Endothelial cell of umbilical vein (primary cell): ENCODE measurements at regions of chr18 and their contacts with region 1.

Region 1: GRCh38 chr18:71598374-71598773 is 945.8 kb downstream of the CBLN2 start:
- DNase-seq: peak; percentile 28
- H3K4me3 ChIP-seq: no peak overlapping the region
- H3K27ac ChIP-seq: no peak overlapping the region
- H3K4me1 ChIP-seq: peaks cover 22% of the 10 kb centered on the region
- H3K27me3 ChIP-seq: no peaks in the 10 kb centered on the region
- CTCF ChIP-seq: no peak
- POLR2A ChIP-seq: no peak

Region 2: DNA sequence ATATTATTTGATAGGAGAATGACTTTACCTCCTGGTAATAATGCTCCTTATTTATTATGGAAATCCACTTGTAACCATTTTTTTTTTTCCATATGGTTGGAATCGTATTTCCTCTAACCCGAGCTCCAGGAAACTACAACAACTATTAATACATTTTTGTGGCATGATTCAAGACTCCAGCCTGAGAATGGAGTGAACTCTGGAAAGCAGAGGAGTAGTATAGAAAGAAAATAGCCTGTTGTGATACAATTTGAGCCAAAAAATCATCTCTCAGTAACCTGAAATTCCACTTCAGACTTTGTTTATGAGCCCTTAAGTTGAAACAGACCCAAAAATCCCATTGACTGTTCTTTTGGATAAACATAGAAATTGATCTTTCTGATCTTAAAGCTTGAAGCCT is 388.4 kb before region 1 on chr18:
- CTCF ChIA-PET with region 1: no interaction called
- POLR2A ChIA-PET with region 1: no interaction called
- dilution Hi-C with region 1: no loop called
- intact Hi-C with region 1: no loop called
- DNase-seq: peak; percentile 90
- H3K4me3 ChIP-seq: no peak overlapping the region
- H3K27ac ChIP-seq: peak overlapping the region; percentile 70
- H3K4me1 ChIP-seq: peaks cover 11% of the 10 kb centered on the region
- H3K27me3 ChIP-seq: no peaks in the 10 kb centered on the region
- CTCF ChIP-seq: no peak
- POLR2A ChIP-seq: no peak

Region 3: GRCh38 chr18:71431171-71431570 is 167.2 kb before region 1 on chr18:
- CTCF ChIA-PET with region 1: no interaction called
- POLR2A ChIA-PET with region 1: no interaction called
- dilution Hi-C with region 1: no loop called
- intact Hi-C with region 1: loop called (anchors 10 kb)
- DNase-seq: no peak
- H3K4me3 ChIP-seq: no peak overlapping the region
- H3K27ac ChIP-seq: peak overlapping the region; percentile 17
- H3K4me1 ChIP-seq: peaks cover 14% of the 10 kb centered on the region
- H3K27me3 ChIP-seq: no peaks in the 10 kb centered on the region
- CTCF ChIP-seq: no peak
- POLR2A ChIP-seq: no peak

Region 4: GRCh38 chr18:72742002-72742401 is 1143.6 kb after region 1 on chr18:
- CTCF ChIA-PET with region 1: no interaction called
- POLR2A ChIA-PET with region 1: no interaction called
- dilution Hi-C with region 1: no loop called
- intact Hi-C with region 1: no loop called
- DNase-seq: no peak
- H3K4me3 ChIP-seq: no peak overlapping the region
- H3K27ac ChIP-seq: no peak overlapping the region
- H3K4me1 ChIP-seq: no peaks in the 10 kb centered on the region
- H3K27me3 ChIP-seq: no peaks in the 10 kb centered on the region
- CTCF ChIP-seq: no peak
- POLR2A ChIP-seq: no peak